GM12878 (cell line): ENCODE measurements at regions of chr22 and their contacts with region 1.

Region 1: DNA sequence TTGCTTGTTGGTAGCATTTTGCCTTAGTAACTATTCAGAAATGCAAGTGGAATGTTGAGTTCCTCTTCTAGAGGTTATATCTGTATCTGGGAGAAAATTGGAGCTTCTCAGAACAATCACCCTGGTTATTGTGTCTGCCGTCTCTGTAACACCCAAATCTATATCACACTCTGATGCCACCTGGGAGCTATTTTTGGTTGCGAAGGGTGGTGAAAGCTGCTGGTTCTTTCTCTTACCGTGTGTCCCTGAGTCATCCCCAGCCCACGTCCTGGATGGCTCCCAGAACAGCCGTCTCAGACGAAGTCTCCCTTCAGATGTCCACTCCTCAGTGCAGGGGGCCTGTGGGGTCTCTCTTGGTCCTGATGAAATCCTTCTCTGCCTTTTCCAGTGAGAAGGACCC is 83.5 kb downstream of the C22orf31 start:
- DNase-seq: no peak
- ATAC-seq: peak; percentile 57
- H3K4me3 ChIP-seq: no peak overlapping the region
- H3K27ac ChIP-seq: no peak overlapping the region
- H3K4me1 ChIP-seq: no peaks in the 10 kb centered on the region
- H3K27me3 ChIP-seq: 0 out of 4 replicates have a peak, but pooled peaks cover 0 to 5% of the 10 kb centered on the region in 2 experiments
- CTCF ChIP-seq: no peak
- EP300 ChIP-seq: no peak
- POLR2A ChIP-seq: no peak
- RAD21 ChIP-seq: no peak

Region 2: GRCh38 chr22:28943501-28943879 is 34.7 kb before region 1 on chr22:
- CTCF ChIA-PET with region 1: no interaction called
- POLR2A ChIA-PET with region 1: no interaction called
- RAD21 ChIA-PET with region 1: interaction called, 4 read pairs
- SMC1A ChIA-PET with region 1: interaction called, 16 read pairs
- in situ Hi-C with region 1: no loop called
- intact Hi-C with region 1: no loop called
- DNase-seq: no peak
- ATAC-seq: no peak
- H3K4me3 ChIP-seq: no peak overlapping the region
- H3K27ac ChIP-seq: no peak overlapping the region
- H3K4me1 ChIP-seq: no peaks in the 10 kb centered on the region
- H3K27me3 ChIP-seq: no peaks in the 10 kb centered on the region
- CTCF ChIP-seq: no peak
- EP300 ChIP-seq: no peak
- POLR2A ChIP-seq: no peak
- RAD21 ChIP-seq: no peak

Region 3: DNA sequence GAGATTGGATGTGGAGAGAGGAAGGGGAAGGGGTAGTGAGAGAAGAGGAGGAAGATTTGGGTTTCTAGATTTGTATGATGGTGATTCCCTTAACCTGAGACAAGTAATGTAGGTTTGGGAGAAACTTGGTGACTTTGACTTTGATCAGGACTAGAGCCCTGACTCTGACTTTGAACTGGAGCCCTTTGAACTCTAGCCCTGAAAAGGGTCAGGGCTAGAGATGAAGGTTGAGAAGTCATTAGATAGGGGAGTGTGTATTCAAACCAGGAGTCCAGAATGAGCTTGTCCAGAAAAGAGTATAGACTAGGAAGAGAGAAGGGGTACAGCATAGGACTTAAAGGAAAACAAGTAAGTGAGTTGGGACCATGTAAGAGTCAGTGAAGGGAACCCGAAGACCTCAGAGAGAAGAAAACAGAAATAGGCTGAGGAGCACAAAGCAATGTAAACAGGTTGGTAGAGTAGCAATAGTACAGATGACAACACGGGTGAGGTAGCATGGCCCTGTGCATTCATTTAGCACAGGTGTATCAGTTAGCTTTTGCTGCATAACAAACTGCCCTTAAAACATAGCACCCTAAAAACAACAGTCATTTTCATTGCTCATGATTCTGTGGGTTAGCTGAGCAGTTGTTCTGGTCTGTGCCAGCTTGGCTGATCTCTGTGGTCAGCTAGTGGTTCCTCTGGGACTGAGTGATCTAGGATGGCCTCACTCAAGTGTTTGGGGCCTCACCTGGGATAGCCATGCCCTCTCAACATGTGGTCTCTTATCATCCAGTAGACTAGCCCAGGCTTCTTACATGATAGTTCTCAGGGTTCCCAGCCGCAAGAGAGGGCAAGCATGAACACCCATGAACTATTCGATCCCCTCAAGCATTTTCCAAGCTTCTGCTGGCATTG is 40.4 kb after region 1 on chr22:
- CTCF ChIA-PET with region 1: interaction called, 4 read pairs
- POLR2A ChIA-PET with region 1: interaction called, 4 read pairs
- RAD21 ChIA-PET with region 1: interaction called, 10 read pairs
- SMC1A ChIA-PET with region 1: interaction called, 6 read pairs
- in situ Hi-C with region 1: no loop called
- intact Hi-C with region 1: no loop called
- DNase-seq: no peak
- ATAC-seq: no peak
- H3K4me3 ChIP-seq: no peak overlapping the region
- H3K27ac ChIP-seq: no peak overlapping the region
- H3K4me1 ChIP-seq: no peaks in the 10 kb centered on the region
- H3K27me3 ChIP-seq: 0 out of 4 replicates have a peak, but pooled peaks cover 0 to 2% of the 10 kb centered on the region in 2 experiments
- CTCF ChIP-seq: no peak
- EP300 ChIP-seq: no peak
- POLR2A ChIP-seq: no peak
- RAD21 ChIP-seq: no peak

Region 4: DNA sequence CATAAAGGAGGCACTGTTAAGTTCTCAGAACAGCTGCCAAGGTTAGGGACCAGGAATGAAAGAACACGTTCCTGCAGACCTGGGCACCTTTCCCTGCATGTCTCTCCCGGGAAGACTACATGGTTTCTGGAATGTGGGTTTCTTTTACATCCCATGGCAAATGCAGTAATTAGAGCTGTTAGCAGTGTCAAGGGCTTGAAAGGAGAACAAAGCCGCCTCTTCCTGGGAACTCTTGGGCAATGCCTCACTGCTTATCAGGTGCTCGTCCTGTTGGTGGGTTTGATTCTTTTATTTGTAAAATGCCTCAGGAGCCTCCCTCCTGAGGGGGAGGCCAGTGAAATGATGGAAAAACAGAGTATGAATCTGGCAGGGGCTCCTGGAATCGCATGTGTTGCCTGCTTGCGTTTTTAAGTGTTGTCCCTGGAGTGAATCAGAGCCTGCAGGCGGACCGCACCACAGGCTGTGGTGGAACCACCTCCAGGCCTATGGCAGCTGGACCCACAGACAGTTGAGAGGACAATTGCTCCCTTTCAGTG is 84.2 kb after region 1 on chr22:
- CTCF ChIA-PET with region 1: no interaction called
- POLR2A ChIA-PET with region 1: no interaction called
- RAD21 ChIA-PET with region 1: no interaction called
- SMC1A ChIA-PET with region 1: no interaction called
- in situ Hi-C with region 1: no loop called
- intact Hi-C with region 1: no loop called
- DNase-seq: no peak
- ATAC-seq: no peak
- H3K4me3 ChIP-seq: no peak overlapping the region
- H3K27ac ChIP-seq: no peak overlapping the region
- H3K4me1 ChIP-seq: no peaks in the 10 kb centered on the region
- H3K27me3 ChIP-seq: peaks cover 0 to 11% of the 10 kb centered on the region in 2 experiments; a peak in 1 of 4 replicates
- CTCF ChIP-seq: no peak
- EP300 ChIP-seq: no peak
- POLR2A ChIP-seq: no peak
- RAD21 ChIP-seq: no peak